PC-9 (cell line): ENCODE measurements at regions of chr14 and their contacts with region 1.

Region 1: DNA sequence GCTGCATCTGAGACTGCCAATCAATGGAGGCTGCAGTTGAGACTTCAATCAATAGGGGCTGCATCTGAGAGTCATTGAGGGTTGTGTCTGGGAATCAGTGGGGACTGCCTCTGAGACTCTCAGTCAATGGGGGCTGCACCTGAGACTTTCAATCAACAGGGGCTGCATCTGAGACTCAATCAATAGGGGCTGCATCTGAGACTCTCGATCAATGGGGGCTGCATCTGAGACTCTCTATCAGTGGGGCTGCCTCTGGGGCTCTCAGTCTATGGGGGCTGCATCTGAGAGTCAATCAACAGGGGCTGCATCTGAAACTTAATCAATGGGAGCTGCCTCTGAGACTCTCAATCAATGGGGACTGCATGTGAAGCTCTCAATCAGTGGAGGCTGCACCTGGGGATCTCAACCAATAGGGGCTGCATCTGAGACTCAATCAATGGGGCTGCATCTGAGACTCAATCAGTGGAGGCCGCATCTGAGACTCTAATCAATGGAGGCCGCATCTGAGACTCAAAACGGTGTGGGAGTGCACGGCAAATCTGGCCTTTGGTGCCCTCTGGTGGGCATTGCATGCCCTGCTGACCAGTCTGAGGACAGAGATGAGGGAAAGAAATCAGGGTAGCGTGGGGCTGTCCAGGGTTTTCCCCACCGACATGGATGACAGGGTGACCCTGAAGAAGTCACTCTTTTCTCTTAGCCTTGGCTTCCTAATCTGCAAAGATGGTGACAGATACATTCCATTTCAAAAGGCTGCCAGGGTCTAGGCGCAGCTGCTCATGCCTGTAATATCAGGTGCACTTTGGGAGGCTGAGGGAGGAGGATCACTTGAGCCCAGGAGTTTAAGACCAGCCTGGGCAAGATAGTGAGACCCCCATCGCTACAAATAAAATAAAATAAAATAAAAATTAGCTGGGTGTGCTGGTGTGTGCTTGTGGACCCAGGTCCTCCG is 41.3 kb upstream of the EIF5 start:
- DNase-seq: peak; percentile 68 to 90
- H3K4me3 ChIP-seq: no peak overlapping the region
- H3K27ac ChIP-seq: no peak overlapping the region
- H3K4me1 ChIP-seq: peaks cover 34% of the 10 kb centered on the region
- H3K27me3 ChIP-seq: no peaks in the 10 kb centered on the region
- CTCF ChIP-seq: peak; percentile 100

Region 2: DNA sequence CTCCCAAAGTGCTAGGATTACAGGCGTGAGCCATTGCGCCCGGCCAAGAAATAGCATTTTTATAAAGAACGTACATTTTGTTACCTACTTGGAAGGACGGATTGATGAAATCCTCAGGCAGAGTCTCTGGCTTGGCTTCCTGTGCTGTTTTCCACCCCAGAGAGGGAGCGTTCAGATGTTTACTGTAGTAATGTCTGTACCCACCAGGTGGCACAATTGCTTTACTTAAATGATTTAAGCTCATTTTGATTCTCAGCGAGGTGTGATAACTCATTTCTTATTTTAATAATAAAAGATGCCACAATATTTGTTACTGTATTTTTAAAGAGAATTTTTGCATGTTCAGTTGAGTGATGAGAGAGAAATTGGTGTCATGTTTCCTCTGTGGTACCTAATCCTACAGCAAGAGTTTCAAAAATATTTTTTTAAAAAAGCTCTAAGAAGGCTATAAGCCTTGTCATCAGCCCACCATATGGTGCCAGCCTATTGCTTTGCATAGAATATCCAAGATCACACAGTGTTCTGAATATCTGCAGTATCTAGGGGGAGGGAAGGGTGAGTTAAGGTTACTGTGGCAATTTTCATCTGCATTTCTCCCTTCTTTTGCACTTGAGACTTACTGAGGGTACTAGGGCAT is 598.1 kb before region 1 on chr14:
- CTCF ChIA-PET with region 1: interaction called, 4 read pairs
- POLR2A ChIA-PET with region 1: no interaction called
- intact Hi-C with region 1: loop called (anchors 10 kb)
- DNase-seq: peak; percentile 66 to 80
- H3K4me3 ChIP-seq: no peak overlapping the region
- H3K27ac ChIP-seq: no peak overlapping the region
- H3K4me1 ChIP-seq: peaks cover 26% of the 10 kb centered on the region
- H3K27me3 ChIP-seq: no peaks in the 10 kb centered on the region
- CTCF ChIP-seq: peak; percentile 99

Region 3: GRCh38 chr14:103067233-103067954 is 225.3 kb before region 1 on chr14:
- CTCF ChIA-PET with region 1: interaction called, 4 read pairs
- POLR2A ChIA-PET with region 1: interaction called, 38 read pairs
- intact Hi-C with region 1: no loop called
- DNase-seq: peak; percentile 92 to 100
- H3K4me3 ChIP-seq: peak overlapping the region; percentile 20; the same call in 1 of the 2 replicates
- H3K27ac ChIP-seq: peak overlapping the region; percentile 94
- H3K4me1 ChIP-seq: peaks cover 60% of the 10 kb centered on the region
- H3K27me3 ChIP-seq: no peaks in the 10 kb centered on the region
- CTCF ChIP-seq: no peak

Region 4: GRCh38 chr14:103141119-103141796 is 151.4 kb before region 1 on chr14:
- CTCF ChIA-PET with region 1: interaction called, 3 read pairs
- POLR2A ChIA-PET with region 1: interaction called, 7 read pairs
- intact Hi-C with region 1: loop called (anchors 1 kb)
- DNase-seq: peak; percentile 78 to 84
- H3K4me3 ChIP-seq: no peak overlapping the region
- H3K27ac ChIP-seq: 0 out of 2 replicates have a peak overlapping the region, but pooled peaks have one; percentile 30
- H3K4me1 ChIP-seq: peaks cover 59% of the 10 kb centered on the region
- H3K27me3 ChIP-seq: no peaks in the 10 kb centered on the region
- CTCF ChIP-seq: peak; percentile 99

Region 5: DNA sequence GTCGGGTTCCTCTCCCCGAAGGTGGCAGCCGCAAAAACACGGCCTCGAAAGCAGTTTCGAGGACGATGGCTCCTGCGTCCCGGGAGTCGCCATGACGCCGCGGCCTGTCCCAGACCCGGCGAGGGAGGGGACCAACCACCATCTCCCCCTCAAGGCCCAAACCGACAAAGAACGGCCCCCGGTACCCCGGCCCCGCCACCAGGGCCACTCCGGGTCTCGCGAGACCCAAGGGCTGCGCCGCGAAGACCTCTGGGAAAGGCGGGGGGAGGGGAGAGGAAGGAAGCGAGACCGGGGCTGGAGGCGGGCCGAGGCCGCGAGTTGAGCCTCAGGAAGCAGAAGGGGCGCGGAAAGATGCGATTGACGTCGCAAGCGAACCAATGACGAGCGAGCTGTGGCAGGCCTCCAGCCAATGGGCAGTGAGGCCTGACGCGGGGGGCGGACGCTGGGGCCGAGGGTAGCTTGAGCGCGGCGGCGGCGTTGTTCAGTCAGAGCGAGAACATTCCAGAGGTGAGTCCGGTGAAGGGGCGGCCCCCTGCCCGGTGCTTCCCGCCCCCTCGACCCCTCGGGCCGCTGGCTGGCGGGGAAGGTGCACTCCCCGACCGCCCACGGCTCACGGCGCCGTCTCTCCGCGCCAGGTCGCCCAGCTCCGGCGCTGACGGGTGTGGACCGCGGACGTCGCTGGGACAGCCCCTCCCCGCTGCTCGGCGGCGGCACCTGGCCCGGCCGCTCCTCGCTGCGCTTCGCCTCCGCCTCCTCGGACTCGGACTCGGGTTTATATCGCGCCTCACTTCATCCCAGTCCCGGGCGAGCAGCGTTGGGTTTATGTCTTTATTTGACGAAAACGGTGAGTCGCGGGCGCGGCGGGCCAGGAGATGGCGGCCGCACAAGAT is 41.3 kb after region 1 on chr14 and contains the start of gene EIF5:
- CTCF ChIA-PET with region 1: no interaction called
- POLR2A ChIA-PET with region 1: interaction called, 8 read pairs
- intact Hi-C with region 1: loop called (anchors 2 kb)
- DNase-seq: peak; percentile 98 to 100
- H3K4me3 ChIP-seq: peak within 1 kb of the TSS; percentile 88
- H3K27ac ChIP-seq: peak within 1 kb of the TSS; percentile 94
- H3K4me1 ChIP-seq: peaks cover 42% of the 10 kb centered on the region
- H3K27me3 ChIP-seq: no peaks in the 10 kb centered on the region
- CTCF ChIP-seq: no peak
- total RNA-seq, gene EIF5: 310 and 330 TPM in 2 replicates

Region 6: DNA sequence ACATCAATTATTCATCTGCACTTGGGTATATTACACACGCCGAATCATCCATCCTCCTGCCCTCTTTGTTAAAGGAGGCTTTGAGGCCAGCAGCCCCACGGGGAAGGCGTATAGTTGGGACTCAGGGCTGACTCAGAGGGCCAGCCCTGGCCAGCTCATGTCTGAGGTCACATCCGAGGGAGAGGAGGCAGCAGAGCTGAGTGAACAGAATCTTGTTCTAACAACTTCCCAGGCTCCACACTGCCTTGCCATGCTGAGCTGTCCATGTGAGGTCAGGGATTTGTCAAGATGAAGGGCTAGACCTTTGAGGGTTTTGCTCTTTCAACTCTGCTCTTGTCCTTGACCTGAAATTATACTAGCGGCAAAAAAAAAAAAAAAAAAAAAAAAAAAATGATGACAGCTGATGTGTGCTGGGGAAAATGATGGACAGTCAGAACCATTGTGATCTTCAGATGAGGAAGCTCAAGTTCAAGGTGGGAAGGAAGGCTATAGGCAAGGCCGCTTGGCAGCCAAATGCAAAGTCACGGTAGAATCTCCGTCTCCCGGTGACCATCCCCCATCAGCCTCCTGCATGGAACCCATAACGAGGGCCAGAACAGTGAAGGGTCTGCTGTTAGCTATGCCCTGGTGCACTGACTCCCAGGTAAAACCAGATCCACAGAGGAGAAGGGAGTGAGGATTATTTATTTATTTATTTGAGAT is 80.1 kb after region 1 on chr14:
- CTCF ChIA-PET with region 1: no interaction called
- POLR2A ChIA-PET with region 1: no interaction called
- intact Hi-C with region 1: no loop called
- DNase-seq: peak; percentile 87 to 96
- H3K4me3 ChIP-seq: no peak overlapping the region
- H3K27ac ChIP-seq: peak overlapping the region; percentile 63
- H3K4me1 ChIP-seq: peaks cover 27% of the 10 kb centered on the region
- H3K27me3 ChIP-seq: no peaks in the 10 kb centered on the region
- CTCF ChIP-seq: no peak

Region 7: DNA sequence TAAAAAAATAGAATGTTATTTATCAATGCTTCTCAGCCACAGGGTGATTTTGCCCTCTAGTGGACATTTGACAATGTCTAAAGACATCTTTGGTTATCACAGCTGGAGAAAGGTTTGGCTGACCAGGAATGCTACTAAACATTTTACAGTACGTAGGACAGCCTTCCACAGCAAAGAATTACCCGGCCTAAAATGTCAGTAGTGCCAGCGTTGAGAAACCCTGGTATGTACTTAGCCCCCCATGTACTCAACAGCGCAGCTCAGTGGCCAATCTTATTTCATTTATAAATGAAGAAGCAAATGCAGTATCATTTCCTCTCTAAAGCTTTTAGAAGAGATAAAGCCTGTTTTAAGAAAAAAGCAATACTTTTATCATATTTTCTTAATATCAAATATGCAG is 98.3 kb after region 1 on chr14:
- CTCF ChIA-PET with region 1: interaction called, 5 read pairs
- POLR2A ChIA-PET with region 1: no interaction called
- intact Hi-C with region 1: loop called (anchors 1 kb)
- DNase-seq: peak; percentile 45 to 72
- H3K4me3 ChIP-seq: no peak overlapping the region
- H3K27ac ChIP-seq: no peak overlapping the region
- H3K4me1 ChIP-seq: peaks cover 57% of the 10 kb centered on the region
- H3K27me3 ChIP-seq: no peaks in the 10 kb centered on the region
- CTCF ChIP-seq: peak; percentile 97